Transverse colon (tissue), 4 donors: ENCODE measurements at regions of chr22 and their contacts with region 1.

Region 1: DNA sequence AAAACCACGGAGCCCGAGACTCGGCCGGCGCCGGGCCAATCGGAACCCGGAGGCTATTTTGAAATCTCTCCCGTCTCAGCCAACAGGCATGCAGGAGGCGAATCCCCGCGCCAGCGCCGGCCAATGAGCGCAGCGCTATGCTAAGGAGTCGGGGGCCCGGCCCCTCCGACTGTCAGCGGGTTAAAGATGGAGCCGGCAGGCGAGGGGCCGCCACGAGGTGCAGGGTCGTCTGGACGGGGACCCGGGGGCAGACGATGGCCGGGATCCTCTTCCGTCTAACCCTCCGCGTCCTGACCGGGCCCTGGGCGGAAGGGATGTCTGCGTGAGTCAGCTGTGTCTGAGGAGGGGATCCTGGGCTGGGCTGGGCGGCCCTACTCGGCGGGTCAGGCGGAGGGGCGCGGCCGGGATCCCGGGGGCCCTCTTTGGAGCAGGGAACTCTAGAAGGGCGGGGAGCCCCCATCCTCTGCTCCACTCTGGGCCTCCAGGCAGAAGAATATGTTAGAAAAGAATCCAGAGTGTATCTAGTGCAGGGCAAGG is 10.0 kb downstream of the SDF2L1 start:
- DNase-seq: peak; percentile 86
- H3K4me3 ChIP-seq: peak overlapping the region; percentile 32 to 55 (median 42)
- H3K27ac ChIP-seq: peak overlapping the region; percentile 8 to 56 (median 34)
- H3K4me1 ChIP-seq: peaks cover 13 to 23% (median 16%) of the 10 kb centered on the region in 4 donors
- H3K27me3 ChIP-seq: peaks cover 3% of the 10 kb centered on the region
- CTCF ChIP-seq: no peak
- EP300 ChIP-seq: no peak
- POLR2A ChIP-seq: no peak

Region 2: GRCh38 chr22:21707677-21708076 is 55.6 kb after region 1 on chr22:
- in situ Hi-C with region 1: loop called in 1 of 4 experiments (anchors 5 kb)
- intact Hi-C with region 1: no loop called
- DNase-seq: no peak
- H3K4me3 ChIP-seq: no peak overlapping the region
- H3K27ac ChIP-seq: no peak overlapping the region
- H3K4me1 ChIP-seq: peaks cover 0 to 11% (median 0%) of the 10 kb centered on the region in 4 donors
- H3K27me3 ChIP-seq: no peaks in the 10 kb centered on the region
- CTCF ChIP-seq: no peak
- EP300 ChIP-seq: no peak
- POLR2A ChIP-seq: no peak

Region 3: DNA sequence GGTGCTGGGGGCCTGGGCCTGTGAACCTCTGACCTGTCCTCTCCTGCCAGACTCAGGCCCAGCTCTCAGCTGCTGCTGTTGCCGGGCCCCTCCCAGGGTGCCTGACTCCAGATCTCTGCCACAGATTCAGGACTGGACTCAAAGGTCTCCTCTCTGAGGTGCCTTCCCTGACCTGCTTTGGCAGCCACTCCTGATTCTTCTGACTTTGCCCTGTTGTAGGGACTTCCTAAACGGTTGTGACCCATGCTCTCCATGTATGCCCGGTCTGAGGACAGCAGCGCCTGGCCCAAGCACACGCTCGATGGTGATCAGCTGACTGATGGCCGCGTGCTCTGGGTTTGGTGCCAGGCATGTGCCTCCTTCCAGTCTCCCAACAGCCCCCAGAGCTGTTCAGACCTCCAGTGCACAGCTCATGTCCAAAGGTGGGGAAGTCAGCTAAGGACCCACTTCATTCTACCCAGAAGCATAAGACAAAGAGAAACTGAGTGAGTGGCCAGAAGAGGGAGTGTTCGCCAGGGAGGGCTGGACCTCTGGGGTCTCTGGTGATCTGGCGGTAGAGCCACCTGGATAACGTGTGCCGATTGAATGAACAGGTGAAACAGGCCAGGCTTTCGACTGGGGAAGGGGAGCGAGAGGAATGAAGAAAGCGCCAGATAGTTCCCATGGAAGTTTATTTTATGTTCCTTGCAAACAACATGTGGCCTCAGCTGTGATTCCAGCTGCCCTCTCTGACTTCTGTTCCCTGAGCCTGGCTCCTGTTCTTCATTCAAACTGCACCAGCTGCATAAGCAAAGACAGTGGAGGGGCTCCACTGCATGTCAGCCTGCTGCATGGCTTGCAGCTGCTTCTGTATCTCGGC is 338.6 kb after region 1 on chr22:
- in situ Hi-C with region 1: no loop called
- intact Hi-C with region 1: no loop called
- DNase-seq: no peak
- H3K4me3 ChIP-seq: no peak overlapping the region
- H3K27ac ChIP-seq: no peak overlapping the region
- H3K4me1 ChIP-seq: no peaks in the 10 kb centered on the region
- H3K27me3 ChIP-seq: no peaks in the 10 kb centered on the region
- CTCF ChIP-seq: no peak
- EP300 ChIP-seq: no peak
- POLR2A ChIP-seq: no peak

Region 4: GRCh38 chr22:22609291-22609690 is 957.2 kb after region 1 on chr22:
- in situ Hi-C with region 1: no loop called
- intact Hi-C with region 1: loop called (anchors 5 kb)
- DNase-seq: no peak
- H3K4me3 ChIP-seq: no peak overlapping the region
- H3K27ac ChIP-seq: no peak overlapping the region
- H3K4me1 ChIP-seq: no peaks in the 10 kb centered on the region
- H3K27me3 ChIP-seq: no peaks in the 10 kb centered on the region
- CTCF ChIP-seq: no peak
- EP300 ChIP-seq: no peak
- POLR2A ChIP-seq: no peak